Gastrocnemius medialis (tissue), 4 donors: ENCODE measurements at regions of chr1 and their contacts with region 1.

Region 1: GRCh38 chr1:166838766-166839599 is at the start of gene POGK:
- DNase-seq: peak; percentile 88 to 91
- ATAC-seq: peak; percentile 86 to 90
- H3K4me3 ChIP-seq: peak within 1 kb of the TSS; percentile 63 to 84 (median 68)
- H3K27ac ChIP-seq: peak within 1 kb of the TSS; percentile 83 to 99 (median 89)
- H3K4me1 ChIP-seq: peaks cover 49 to 50% of the 10 kb centered on the region in 2 donors
- H3K27me3 ChIP-seq: no peaks in the 10 kb centered on the region
- CTCF ChIP-seq: no peak
- POLR2A ChIP-seq: peak; percentile 78 to 84
- total RNA-seq, gene POGK: 6.6 to 9.6 (median 9.0) TPM

Region 2: GRCh38 chr1:166869318-166870099 is 30.5 kb after region 1 on chr1:
- in situ Hi-C with region 1: loop called in 1 of 4 experiments (anchors 5 kb)
- intact Hi-C with region 1: no loop called
- DNase-seq: no peak
- ATAC-seq: no peak
- H3K4me3 ChIP-seq: no peak overlapping the region
- H3K27ac ChIP-seq: no peak overlapping the region
- H3K4me1 ChIP-seq: peaks cover 3 to 18% of the 10 kb centered on the region in 2 donors
- H3K27me3 ChIP-seq: no peaks in the 10 kb centered on the region
- CTCF ChIP-seq: no peak
- POLR2A ChIP-seq: no peak

Region 3: DNA sequence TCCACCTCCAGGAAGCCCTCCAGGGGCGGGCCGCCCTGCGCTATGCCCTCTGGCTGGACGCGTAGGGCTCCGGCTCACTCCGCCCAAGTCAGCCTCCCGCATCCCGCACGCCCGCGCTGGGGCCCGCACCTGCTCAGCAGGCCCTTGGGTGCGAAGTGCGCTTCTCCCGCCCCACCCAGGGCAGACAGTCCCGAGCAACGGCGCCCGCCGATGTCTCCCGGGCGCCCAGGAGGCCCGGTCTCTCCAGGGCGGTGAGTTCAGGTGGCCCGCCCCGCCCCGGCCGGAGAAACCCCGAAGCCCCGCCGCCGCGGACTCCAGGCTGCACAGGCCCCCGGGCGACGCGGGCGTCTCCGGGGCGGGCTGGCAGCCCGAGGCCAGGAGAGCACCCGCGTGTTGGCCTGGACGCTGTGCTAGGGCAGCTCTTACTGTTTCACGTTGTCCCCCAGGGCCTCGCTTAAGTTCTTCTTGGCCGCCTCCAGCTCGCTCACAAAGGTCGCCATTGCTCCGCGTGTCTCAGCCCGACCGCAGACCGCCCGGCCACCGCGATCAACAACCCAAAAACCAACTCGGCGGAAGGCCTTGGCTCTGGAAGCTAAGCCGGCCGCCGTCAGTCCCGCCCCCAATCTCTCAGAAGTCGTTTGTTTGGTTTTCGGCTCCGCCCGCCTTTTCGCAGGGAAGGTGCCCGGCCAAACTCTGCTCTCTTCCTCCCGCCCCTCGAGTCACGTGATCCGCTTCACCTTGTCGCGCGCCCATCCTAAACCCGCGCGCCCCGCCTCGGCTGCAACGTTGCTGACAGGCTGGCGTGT is 37.0 kb after region 1 on chr1 and contains the start of gene TADA1:
- in situ Hi-C with region 1: loop called in 2 of 4 experiments (anchors 5 kb)
- intact Hi-C with region 1: loop called (anchors 1 kb)
- DNase-seq: peak; percentile 98 to 99
- ATAC-seq: peak; percentile 95 to 97
- H3K4me3 ChIP-seq: peak within 1 kb of the TSS; percentile 58 to 81 (median 74)
- H3K27ac ChIP-seq: peak within 1 kb of the TSS; percentile 84 to 94 (median 92)
- H3K4me1 ChIP-seq: peaks cover 12 to 33% of the 10 kb centered on the region in 2 donors
- H3K27me3 ChIP-seq: no peaks in the 10 kb centered on the region
- CTCF ChIP-seq: peak in 4 of 5 experiments; percentile 34 to 53 (median 48)
- POLR2A ChIP-seq: peak; percentile 70 to 88
- total RNA-seq, gene TADA1: 8.7 to 11.8 (median 10.0) TPM

Region 4: DNA sequence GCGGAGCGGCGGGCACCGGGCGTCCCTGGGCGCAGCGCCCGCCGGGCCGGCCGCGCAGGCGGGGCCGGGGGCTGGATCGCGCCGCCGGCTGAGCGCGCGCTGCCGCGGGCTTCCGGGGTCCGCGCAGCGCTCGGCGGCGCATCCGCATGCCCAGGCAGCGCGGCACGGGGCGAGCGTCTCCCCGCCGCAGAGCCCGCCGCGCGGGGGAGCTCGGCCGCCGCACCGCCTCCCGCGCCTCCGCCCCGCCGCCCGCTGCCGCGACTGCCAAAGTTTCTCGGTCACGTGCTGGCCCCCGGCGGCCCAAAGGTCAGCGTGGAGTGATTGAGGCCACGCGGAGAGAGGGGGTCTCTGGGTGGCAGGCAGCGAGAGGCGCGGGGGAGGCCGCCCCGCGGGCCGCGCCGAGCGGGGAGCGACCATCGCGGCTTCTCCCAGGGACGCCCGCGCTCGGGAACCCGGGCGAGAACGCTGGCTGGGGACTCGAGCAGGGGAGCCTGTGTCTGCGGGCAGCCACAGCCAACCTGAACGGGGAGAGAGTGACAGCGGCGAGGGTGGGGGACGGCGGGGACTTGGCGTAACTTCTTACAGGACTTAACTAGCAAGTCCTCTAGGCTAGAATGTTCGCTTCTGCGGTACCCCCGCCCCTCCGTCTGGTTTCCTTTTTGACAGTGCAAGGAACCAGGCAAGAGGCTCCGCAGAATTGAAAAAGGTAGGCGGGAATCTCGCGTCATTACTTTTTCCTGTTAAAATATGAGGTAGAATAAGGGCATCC is 136.6 kb after region 1 on chr1 and contains the start of gene ILDR2:
- in situ Hi-C with region 1: no loop called
- intact Hi-C with region 1: no loop called
- DNase-seq: peak in 1 of 2 donors; percentile 23
- ATAC-seq: peak; percentile 74 to 77
- H3K4me3 ChIP-seq: peak within 1 kb of the TSS; percentile 65 to 82 (median 74)
- H3K27ac ChIP-seq: peak within 1 kb of the TSS; percentile 26 to 71 (median 48)
- H3K4me1 ChIP-seq: peaks cover 4 to 9% of the 10 kb centered on the region in 2 donors
- H3K27me3 ChIP-seq: peaks cover 10 to 33% (median 19%) of the 10 kb centered on the region in 3 donors
- CTCF ChIP-seq: peak in 1 of 5 experiments; percentile 24
- POLR2A ChIP-seq: no peak
- total RNA-seq, gene ILDR2: 0.10 to 0.47 (median 0.25) TPM